ENCODE measurements at regions of chr16 and their contacts with region 1.

Region 1: GRCh38 chr16:53773150-53773846 is 69.3 kb downstream of the FTO start:
- DNase-seq: peak; percentile 79
- H3K4me3 ChIP-seq: no peak overlapping the region
- H3K27ac ChIP-seq: no peak overlapping the region
- H3K4me1 ChIP-seq: peaks cover 7% of the 10 kb centered on the region
- H3K27me3 ChIP-seq: no peaks in the 10 kb centered on the region
- CTCF ChIP-seq: peak; percentile 35 to 56
- POLR2A ChIP-seq: no peak

Region 2: DNA sequence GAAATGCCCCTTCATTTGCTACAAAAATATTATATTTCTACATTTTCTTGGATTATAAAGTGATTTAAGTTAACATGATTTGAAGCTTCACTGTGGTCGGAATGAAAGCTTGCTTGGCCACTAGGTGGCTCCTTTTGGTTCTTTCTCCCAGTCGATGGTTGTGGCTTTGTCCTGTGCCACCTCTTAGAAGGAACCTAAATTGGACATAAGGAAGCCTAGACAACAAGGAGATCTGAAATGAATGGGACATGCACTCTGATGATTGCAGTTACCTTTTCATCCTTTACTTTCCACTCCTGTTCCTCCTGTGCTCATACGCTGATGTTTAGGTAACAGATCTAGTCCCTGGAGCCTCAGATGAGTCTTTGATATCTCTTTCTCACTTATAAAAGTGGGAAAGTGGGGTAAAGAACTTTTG is 30.1 kb before region 1 on chr16:
- CTCF ChIA-PET with region 1: interaction called, 14 read pairs
- POLR2A ChIA-PET with region 1: no interaction called
- dilution Hi-C with region 1: no loop called
- intact Hi-C with region 1: no loop called
- DNase-seq: peak; percentile 28
- H3K4me3 ChIP-seq: no peak overlapping the region
- H3K27ac ChIP-seq: no peak overlapping the region
- H3K4me1 ChIP-seq: peaks cover 11% of the 10 kb centered on the region
- H3K27me3 ChIP-seq: no peaks in the 10 kb centered on the region
- CTCF ChIP-seq: peak; percentile 63 to 67
- POLR2A ChIP-seq: no peak

Region 3: DNA sequence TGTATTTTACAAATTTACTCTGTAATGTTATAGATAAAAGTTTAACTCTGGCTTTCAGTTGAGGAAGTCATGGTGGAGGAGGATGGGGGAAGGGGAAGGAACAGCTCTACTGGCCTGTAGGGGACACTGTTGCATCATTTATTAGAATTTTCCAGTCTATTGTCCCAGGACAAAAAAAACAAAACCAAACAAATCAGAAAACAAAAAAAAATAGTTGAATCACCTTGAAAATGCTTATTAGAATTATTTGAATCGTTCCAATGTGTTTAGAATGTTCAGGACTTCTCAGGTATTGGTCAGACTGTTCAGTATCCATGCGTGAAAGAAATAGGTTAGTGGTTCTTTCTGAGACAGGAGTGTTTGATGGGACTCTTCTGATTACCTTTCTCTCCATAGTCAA is 172.7 kb after region 1 on chr16:
- CTCF ChIA-PET with region 1: interaction called, 5 read pairs
- POLR2A ChIA-PET with region 1: no interaction called
- dilution Hi-C with region 1: no loop called
- intact Hi-C with region 1: loop called (anchors 5 kb)
- DNase-seq: peak; percentile 58
- H3K4me3 ChIP-seq: no peak overlapping the region
- H3K27ac ChIP-seq: no peak overlapping the region
- H3K4me1 ChIP-seq: no peaks in the 10 kb centered on the region
- H3K27me3 ChIP-seq: no peaks in the 10 kb centered on the region
- CTCF ChIP-seq: peak; percentile 55 to 69
- POLR2A ChIP-seq: no peak

Region 4: GRCh38 chr16:54077050-54077821 is 303.9 kb after region 1 on chr16:
- CTCF ChIA-PET with region 1: interaction called, 3 read pairs
- POLR2A ChIA-PET with region 1: no interaction called
- dilution Hi-C with region 1: no loop called
- intact Hi-C with region 1: loop called (anchors 5 kb)
- DNase-seq: peak; percentile 88
- H3K4me3 ChIP-seq: no peak overlapping the region
- H3K27ac ChIP-seq: peak overlapping the region; percentile 84
- H3K4me1 ChIP-seq: peaks cover 21% of the 10 kb centered on the region
- H3K27me3 ChIP-seq: no peaks in the 10 kb centered on the region
- CTCF ChIP-seq: no peak
- POLR2A ChIP-seq: no peak

Region 5: DNA sequence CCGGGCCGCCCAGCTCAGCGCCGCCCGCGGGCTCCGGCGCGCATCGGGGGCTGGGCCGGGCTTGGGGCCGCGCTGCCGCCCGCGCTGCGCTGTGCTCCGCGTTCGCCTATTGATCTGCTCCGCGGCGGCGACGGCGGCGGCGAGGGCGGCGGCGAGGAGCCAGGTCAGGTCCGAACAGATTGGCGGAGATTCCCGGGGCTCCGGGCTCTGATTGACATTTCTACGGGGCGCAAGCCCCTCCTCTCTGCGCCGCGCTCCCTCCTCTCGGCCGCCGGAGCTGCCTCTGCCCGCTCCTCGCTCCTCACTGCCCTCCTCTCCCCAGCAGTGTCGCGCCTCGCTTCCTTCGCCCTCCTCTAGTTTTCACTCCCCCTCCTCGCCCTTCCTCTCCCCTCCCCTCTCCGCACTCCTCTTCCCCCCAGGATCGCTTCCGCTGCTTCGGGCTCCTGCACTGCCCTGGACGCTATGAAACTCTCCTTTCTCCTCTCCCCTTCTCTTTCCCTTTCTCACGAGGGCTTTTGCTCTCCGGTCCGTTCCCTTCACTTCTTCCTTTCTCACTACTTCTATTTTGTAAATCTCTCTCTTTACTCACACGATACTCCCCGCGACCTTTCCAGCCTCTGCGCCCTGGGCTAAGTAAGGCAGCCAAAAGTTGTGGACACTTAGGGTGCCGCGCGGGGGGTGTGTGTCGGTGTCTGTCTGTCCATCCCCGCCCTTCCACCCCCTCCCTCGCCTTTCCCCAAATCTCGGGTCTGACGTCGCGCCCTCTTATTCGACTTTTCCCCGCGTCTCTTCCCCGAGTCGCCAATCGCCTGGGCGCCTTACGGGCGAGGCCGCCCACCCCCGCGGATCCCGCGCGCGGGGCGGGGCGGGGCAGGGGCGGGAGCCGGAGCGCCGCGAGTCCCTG is 513.0 kb after region 1 on chr16 and contains the start of gene IRX3:
- CTCF ChIA-PET with region 1: interaction called, 5 read pairs
- POLR2A ChIA-PET with region 1: no interaction called
- dilution Hi-C with region 1: no loop called
- intact Hi-C with region 1: loop called (anchors 1 kb)
- DNase-seq: peak; percentile 22
- H3K4me3 ChIP-seq: peak within 1 kb of the TSS; percentile 37 to 50 (median 42)
- H3K27ac ChIP-seq: no peak within 1 kb of the TSS
- H3K4me1 ChIP-seq: peaks cover 8% of the 10 kb centered on the region
- H3K27me3 ChIP-seq: peaks cover 76 to 94% of the 10 kb centered on the region in 2 experiments
- CTCF ChIP-seq: no peak
- POLR2A ChIP-seq: no peak
- total RNA-seq, gene IRX3: not detected in 2 replicates

Region 6: GRCh38 chr16:54957403-54958171 is 1184.3 kb after region 1 on chr16:
- CTCF ChIA-PET with region 1: interaction called, 8 read pairs
- POLR2A ChIA-PET with region 1: no interaction called
- dilution Hi-C with region 1: no loop called
- intact Hi-C with region 1: loop called (anchors 1 kb)
- DNase-seq: no peak
- H3K4me3 ChIP-seq: no peak overlapping the region
- H3K27ac ChIP-seq: no peak overlapping the region
- H3K4me1 ChIP-seq: no peaks in the 10 kb centered on the region
- H3K27me3 ChIP-seq: no peaks in the 10 kb centered on the region
- CTCF ChIP-seq: peak; percentile 30 to 44
- POLR2A ChIP-seq: no peak

Region 7: DNA sequence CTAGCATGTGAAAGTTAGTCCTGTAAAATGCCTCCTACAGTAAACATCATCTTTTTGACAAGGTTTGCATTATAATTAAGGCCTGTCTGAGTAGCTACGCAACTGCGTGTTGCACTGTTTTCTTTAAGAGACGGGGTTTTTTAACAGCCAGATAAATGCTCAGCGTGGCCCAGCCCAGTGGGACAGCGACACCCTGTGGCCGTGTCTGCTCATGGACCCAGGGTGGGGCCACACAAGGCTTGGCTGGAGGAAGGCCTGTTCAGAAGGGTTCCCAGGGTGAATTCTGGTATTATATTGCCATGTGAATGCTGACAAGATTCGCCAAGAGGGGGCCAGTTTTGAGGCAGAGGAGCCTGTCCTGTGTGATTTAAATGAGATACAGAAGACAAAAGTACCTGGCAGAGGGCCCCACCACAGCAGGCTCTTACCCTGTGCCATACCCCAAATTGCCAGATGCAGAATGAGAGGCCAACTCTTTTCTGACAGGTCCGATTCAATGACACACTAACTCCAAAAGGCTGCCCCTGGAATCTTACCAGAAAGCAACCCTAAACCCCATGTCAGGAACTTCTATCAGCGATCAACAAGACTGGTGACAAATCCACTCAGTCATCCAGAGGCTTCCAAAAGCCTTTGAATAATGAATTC is 1484.8 kb after region 1 on chr16:
- CTCF ChIA-PET with region 1: interaction called, 10 read pairs
- POLR2A ChIA-PET with region 1: no interaction called
- dilution Hi-C with region 1: no loop called
- intact Hi-C with region 1: loop called (anchors 1 kb)
- DNase-seq: peak; percentile 53
- H3K4me3 ChIP-seq: no peak overlapping the region
- H3K27ac ChIP-seq: no peak overlapping the region
- H3K4me1 ChIP-seq: no peaks in the 10 kb centered on the region
- H3K27me3 ChIP-seq: no peaks in the 10 kb centered on the region
- CTCF ChIP-seq: peak; percentile 74 to 76
- POLR2A ChIP-seq: no peak